ENCODE measurements at regions of chr2 and their contacts with region 1.

Region 1: GRCh38 chr2:161090411-161090810 is 69.8 kb upstream of the TANK start:
- DNase-seq: peak; percentile 73
- ATAC-seq: peak; percentile 90
- H3K4me3 Mint-ChIP-seq: peak overlapping the region; percentile 64
- H3K27ac Mint-ChIP-seq: peak overlapping the region; percentile 83
- H3K4me1 Mint-ChIP-seq: peaks cover 55% of the 10 kb centered on the region
- H3K27me3 Mint-ChIP-seq: no peaks in the 10 kb centered on the region

Region 2: DNA sequence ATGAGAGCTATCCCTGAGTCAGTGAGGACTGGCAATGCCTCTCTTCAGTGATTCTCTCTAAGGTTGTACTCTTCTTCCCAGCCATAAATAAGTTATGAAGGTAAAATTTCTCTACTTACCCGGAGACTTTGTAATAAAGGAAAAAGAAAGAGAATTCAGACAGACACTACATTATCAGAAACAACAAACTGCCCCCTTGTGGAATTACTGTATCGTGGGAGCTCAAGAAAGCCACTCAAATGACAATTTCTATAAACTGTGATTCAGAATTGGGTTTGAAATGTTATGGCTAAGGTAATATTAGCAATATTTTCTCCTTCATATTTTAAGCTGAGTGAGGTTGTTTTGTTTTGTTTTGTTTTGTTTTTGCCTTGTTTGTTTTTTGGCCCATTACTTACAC is 86.0 kb before region 1 on chr2:
- CTCF ChIA-PET with region 1: no interaction called
- POLR2A ChIA-PET with region 1: no interaction called
- DNase-seq: no peak
- ATAC-seq: no peak
- H3K4me3 Mint-ChIP-seq: no peak overlapping the region
- H3K27ac Mint-ChIP-seq: no peak overlapping the region
- H3K4me1 Mint-ChIP-seq: no peaks in the 10 kb centered on the region
- H3K27me3 Mint-ChIP-seq: peaks cover 25% of the 10 kb centered on the region

Region 3: GRCh38 chr2:161077367-161078210 is 12.8 kb before region 1 on chr2:
- CTCF ChIA-PET with region 1: interaction called, 16 read pairs
- POLR2A ChIA-PET with region 1: no interaction called
- DNase-seq: peak; percentile 92
- ATAC-seq: peak; percentile 86
- H3K4me3 Mint-ChIP-seq: peak overlapping the region; percentile 49
- H3K27ac Mint-ChIP-seq: peak overlapping the region; percentile 92
- H3K4me1 Mint-ChIP-seq: peaks cover 54% of the 10 kb centered on the region
- H3K27me3 Mint-ChIP-seq: no peaks in the 10 kb centered on the region